Aorta (tissue), 5 donors: ENCODE measurements at regions of chr1 and their contacts with region 1.

Region 1: GRCh38 chr1:15337656-15338402 is 71.9 kb upstream of the EFHD2 start:
- DNase-seq: peak; percentile 73 to 76
- ATAC-seq: peak; percentile 90
- H3K4me3 ChIP-seq: no peak overlapping the region
- H3K27ac ChIP-seq: peak overlapping the region in 1 of 2 donors; percentile 2
- H3K4me1 ChIP-seq: peaks cover 0 to 2% of the 10 kb centered on the region in 2 donors
- H3K27me3 ChIP-seq: no peaks in the 10 kb centered on the region

Region 2: GRCh38 chr1:15409388-15410222 is 71.8 kb after region 1 on chr1 and contains the start of gene EFHD2:
- intact Hi-C with region 1: loop called (anchors 5 kb)
- DNase-seq: peak; percentile 90 to 95
- ATAC-seq: peak; percentile 88
- H3K4me3 ChIP-seq: peak within 1 kb of the TSS; percentile 78 to 97
- H3K27ac ChIP-seq: no peak within 1 kb of the TSS
- H3K4me1 ChIP-seq: peaks cover 0 to 3% of the 10 kb centered on the region in 2 donors
- H3K27me3 ChIP-seq: no peaks in the 10 kb centered on the region
- total RNA-seq, gene EFHD2: 34.9 to 43.7 TPM

Region 3: DNA sequence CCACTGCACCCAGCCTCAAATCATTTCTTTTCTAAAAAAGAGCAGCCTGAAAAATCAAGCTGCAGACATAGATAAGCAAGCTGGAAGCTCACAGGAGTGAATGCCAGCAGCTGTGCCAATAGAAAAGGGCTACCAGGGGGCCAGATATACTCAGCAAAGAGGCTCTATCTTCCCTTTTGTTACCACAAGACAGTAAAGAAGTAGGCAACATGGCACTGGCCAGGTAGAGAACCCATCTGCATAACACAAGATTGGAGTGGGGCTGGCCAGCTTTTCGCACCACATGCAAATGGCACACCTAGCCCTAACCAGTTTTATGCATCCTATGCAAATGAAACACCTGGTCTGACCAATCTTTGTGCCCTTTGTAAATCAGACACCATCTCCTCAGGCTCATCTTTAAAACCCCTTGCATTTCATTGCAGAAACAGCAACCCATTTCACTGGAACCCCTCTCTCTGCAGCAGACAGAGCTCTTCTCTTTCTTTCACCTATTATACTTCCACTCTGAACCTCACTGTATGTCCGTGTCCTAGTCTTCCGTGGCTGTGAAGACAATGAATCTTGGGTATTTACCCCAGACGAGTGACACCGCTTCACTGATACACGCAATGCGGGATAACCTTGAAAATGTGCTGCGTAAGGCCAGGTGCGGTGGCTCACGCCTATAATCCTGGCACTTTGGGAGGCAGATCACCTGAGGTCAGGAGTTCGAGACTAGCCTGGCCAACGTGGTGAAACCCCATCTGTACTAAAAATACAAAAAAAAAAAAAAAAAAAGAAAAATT is 171.1 kb after region 1 on chr1:
- intact Hi-C with region 1: no loop called
- DNase-seq: peak in 1 of 2 donors; percentile 30
- ATAC-seq: no peak
- H3K4me3 ChIP-seq: no peak overlapping the region
- H3K27ac ChIP-seq: no peak overlapping the region
- H3K4me1 ChIP-seq: no peaks in the 10 kb centered on the region
- H3K27me3 ChIP-seq: no peaks in the 10 kb centered on the region